H1 (cell line): ENCODE measurements at regions of chr11 and their contacts with region 1.

Region 1: DNA sequence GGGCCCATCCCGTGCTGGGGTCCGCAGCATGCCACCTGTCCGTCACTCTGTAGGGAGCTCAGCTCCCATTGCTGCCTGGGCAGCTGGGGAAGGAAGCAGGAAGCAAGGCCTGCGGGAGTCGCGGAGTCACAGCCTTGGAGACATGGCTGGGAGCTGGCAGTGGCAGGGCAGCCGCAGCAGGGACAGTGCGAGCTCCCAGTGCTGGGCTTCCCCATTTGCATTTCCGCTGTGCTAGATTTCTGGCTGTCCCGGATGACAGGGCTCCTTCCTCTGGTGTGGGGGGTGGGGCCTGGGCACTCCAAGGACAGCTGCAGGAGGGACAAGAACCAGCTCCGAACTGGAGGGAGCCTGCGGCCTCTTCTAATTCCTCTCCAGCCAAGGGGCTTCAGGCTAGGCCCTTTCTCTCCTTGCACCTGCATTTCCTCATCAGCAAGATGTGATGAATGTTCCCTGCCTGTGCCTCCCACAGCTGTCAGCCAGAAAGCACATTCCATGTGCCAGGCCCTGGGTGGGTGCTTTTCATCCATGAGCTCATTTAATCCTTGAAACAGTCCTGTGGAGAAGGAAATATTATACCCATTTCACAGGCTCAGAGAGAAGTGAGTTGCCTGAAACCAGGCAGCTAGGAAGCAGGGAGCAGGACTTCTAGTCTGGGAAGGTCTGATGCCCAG is 48.0 kb downstream of the MYO7A start:
- DNase-seq: peak in 1 of 2 experiments; percentile 73
- H3K4me3 ChIP-seq: no peak overlapping the region
- H3K27ac ChIP-seq: 0 out of 2 replicates have a peak overlapping the region, but pooled peaks have one; percentile 30
- H3K4me1 ChIP-seq: peaks cover 18 to 50% (median 27%) of the 10 kb centered on the region in 4 experiments
- H3K27me3 ChIP-seq: peaks cover 0 to 3% (median 0%) of the 10 kb centered on the region in 4 experiments; a peak in 1 of 7 replicates
- CTCF ChIP-seq: no peak
- EP300 ChIP-seq: no peak
- POLR2A ChIP-seq: no peak
- RAD21 ChIP-seq: no peak

Region 2: DNA sequence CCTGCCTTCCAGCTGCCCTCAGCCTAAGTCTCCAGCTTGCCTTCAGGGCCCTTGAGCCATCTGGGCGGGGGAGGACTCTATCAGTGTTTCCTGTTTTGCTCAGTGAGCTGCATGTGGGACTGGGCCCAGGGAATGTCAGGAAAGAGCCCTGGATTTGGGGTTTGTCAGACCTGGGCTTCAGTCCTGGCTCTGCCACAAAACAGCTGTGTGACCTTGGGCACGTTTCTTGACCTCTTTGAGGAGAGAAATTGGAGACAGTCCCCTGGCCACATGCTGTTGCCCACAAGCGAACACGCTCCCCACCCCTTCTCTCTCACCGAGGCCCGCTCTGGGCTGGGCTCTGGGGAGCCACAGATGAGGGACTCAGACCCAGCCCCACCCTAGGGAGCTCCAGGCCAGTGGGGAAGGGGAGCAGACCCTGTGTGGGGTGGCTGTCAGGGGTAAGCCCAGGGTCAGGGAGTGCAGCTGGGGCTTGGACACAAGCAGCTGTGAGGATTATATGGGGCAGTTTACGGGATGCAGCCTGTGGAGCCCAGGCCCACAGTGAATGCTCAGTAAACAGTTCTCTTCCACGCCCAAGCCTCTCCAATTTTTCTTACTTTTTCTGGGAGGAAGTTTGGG is 35.7 kb before region 1 on chr11:
- CTCF ChIA-PET with region 1: interaction called, 10 read pairs
- POLR2A ChIA-PET with region 1: interaction called, 6 read pairs
- DNase-seq: peak; percentile 9 to 54
- H3K4me3 ChIP-seq: no peak overlapping the region
- H3K27ac ChIP-seq: no peak overlapping the region
- H3K4me1 ChIP-seq: peaks cover 0 to 9% (median 3%) of the 10 kb centered on the region in 4 experiments; a peak in 4 of 7 replicates
- H3K27me3 ChIP-seq: no peaks in the 10 kb centered on the region
- CTCF ChIP-seq: no peak
- EP300 ChIP-seq: no peak
- POLR2A ChIP-seq: no peak
- RAD21 ChIP-seq: no peak

Region 3: GRCh38 chr11:77147668-77148321 is 28.2 kb before region 1 on chr11:
- CTCF ChIA-PET with region 1: interaction called, 18 read pairs
- POLR2A ChIA-PET with region 1: interaction called, 14 read pairs
- DNase-seq: peak; percentile 29 to 79
- H3K4me3 ChIP-seq: peak overlapping the region; percentile 54 to 65 (median 58)
- H3K27ac ChIP-seq: no peak overlapping the region
- H3K4me1 ChIP-seq: peaks cover 0 to 11% (median 5%) of the 10 kb centered on the region in 4 experiments; a peak in 6 of 7 replicates
- H3K27me3 ChIP-seq: peaks cover 0 to 2% (median 0%) of the 10 kb centered on the region in 4 experiments; a peak in 2 of 7 replicates
- CTCF ChIP-seq: no peak
- EP300 ChIP-seq: no peak
- POLR2A ChIP-seq: no peak
- RAD21 ChIP-seq: no peak; a peak in 1 of 4 replicates